Calu3 (cell line): ENCODE measurements at regions of chr9 and their contacts with region 1.

Region 1: GRCh38 chr9:3181049-3181953 is 337.4 kb upstream of the PUM3 start:
- DNase-seq: peak; percentile 24
- H3K4me3 Mint-ChIP-seq: no peak overlapping the region
- H3K27ac Mint-ChIP-seq: no peak overlapping the region
- H3K4me1 Mint-ChIP-seq: no peaks in the 10 kb centered on the region
- H3K27me3 Mint-ChIP-seq: peaks cover 58% of the 10 kb centered on the region
- CTCF ChIP-seq: no peak

Region 2: DNA sequence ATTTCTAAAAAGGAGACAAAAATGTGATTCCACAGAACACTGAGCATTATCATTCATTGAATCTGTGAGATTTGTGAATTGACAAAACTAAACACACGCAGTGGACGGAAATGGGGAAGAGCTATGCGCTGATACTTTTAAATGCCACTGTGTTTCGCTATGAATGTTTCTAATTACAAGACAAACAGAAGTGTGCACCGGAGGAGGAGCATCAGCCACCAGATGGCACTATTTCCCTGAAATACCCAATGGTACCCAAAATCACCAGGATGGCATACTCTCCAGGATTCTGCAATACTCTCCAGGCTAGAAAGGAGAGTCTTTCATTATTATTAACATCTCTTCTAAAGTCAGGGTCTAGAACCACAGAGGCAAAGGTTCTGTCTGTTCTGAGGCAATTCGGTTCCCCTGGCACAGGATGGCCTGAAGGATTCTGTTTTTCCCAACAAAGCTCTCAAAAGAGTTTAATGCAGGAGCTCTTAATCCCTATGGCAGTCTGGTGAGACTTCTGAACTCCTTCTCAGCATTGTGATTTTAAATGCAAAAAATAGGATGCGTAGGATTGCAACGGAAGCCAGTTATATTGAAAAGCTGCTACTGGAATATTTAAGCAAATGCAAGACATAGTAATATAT is 323.6 kb before region 1 on chr9:
- CTCF ChIA-PET with region 1: interaction called, 3 read pairs
- intact Hi-C with region 1: loop called (anchors 2 kb)
- DNase-seq: peak; percentile 62
- H3K4me3 Mint-ChIP-seq: no peak overlapping the region
- H3K27ac Mint-ChIP-seq: no peak overlapping the region
- H3K4me1 Mint-ChIP-seq: no peaks in the 10 kb centered on the region
- H3K27me3 Mint-ChIP-seq: peaks cover 62% of the 10 kb centered on the region
- CTCF ChIP-seq: peak; percentile 28

Region 3: GRCh38 chr9:2872257-2872935 is 308.9 kb before region 1 on chr9:
- CTCF ChIA-PET with region 1: no interaction called
- intact Hi-C with region 1: loop called (anchors 5 kb)
- DNase-seq: peak; percentile 2
- H3K4me3 Mint-ChIP-seq: no peak overlapping the region
- H3K27ac Mint-ChIP-seq: no peak overlapping the region
- H3K4me1 Mint-ChIP-seq: no peaks in the 10 kb centered on the region
- H3K27me3 Mint-ChIP-seq: peaks cover 92% of the 10 kb centered on the region
- CTCF ChIP-seq: no peak

Region 4: GRCh38 chr9:3125597-3126405 is 55.5 kb before region 1 on chr9:
- CTCF ChIA-PET with region 1: no interaction called
- intact Hi-C with region 1: no loop called
- DNase-seq: no peak
- H3K4me3 Mint-ChIP-seq: no peak overlapping the region
- H3K27ac Mint-ChIP-seq: no peak overlapping the region
- H3K4me1 Mint-ChIP-seq: no peaks in the 10 kb centered on the region
- H3K27me3 Mint-ChIP-seq: peaks cover 16% of the 10 kb centered on the region
- CTCF ChIP-seq: no peak